HCT116 (cell line): ENCODE measurements at regions of chr9 and their contacts with region 1.

Region 1: GRCh38 chr9:613771-614347 is 227.6 kb upstream of the DMRT1 start:
- DNase-seq: peak; percentile 13
- ATAC-seq: peak; percentile 97
- H3K4me3 ChIP-seq: no peak overlapping the region
- H3K27ac ChIP-seq: no peak overlapping the region
- H3K4me1 ChIP-seq: no peaks in the 10 kb centered on the region
- H3K27me3 ChIP-seq: no peaks in the 10 kb centered on the region
- CTCF ChIP-seq: peak; percentile 40 to 97 (median 69)
- POLR2A ChIP-seq: no peak
- RAD21 ChIP-seq: peak; percentile 73

Region 2: DNA sequence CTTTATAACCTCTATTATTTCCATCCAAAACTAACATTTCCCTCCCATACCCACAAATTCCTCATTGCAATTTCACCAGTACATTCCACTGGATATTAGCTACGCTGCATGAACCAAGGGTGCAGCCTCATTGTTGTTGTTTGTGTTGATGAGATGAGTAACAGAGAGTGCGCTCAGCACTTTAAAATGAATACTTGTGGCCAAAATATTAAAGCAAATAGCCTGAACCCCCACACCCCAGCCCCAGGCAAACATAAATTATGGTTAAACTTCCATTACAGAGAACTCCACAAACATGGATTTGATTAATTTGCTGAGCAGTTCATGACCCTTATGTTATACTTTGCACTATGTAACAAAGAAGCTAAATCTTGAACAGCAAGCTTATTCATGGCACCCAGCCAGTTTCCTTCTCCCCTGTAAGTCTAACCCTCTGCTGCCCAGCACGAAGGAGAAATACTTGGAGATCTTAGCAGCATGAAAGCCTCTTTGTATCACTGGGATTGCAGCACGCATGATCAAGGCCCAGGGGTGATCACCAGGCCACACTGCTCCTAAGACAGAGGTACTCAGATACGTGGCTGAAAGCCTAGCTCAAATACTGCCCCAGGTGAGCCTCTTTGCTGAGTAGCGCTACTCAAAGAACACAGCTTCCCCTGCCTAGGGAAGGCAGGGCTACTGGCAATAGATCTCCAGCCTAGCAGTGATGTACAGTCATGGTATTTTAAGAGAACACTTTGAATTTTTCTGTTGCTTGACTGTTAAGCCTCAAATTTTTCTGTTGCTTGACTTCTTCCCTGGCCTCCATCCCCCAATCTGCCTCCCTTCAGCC is 194.1 kb before region 1 on chr9:
- CTCF ChIA-PET with region 1: no interaction called
- POLR2A ChIA-PET with region 1: no interaction called
- RAD21 ChIA-PET with region 1: no interaction called
- intact Hi-C with region 1: no loop called
- DNase-seq: no peak
- ATAC-seq: no peak
- H3K4me3 ChIP-seq: no peak overlapping the region
- H3K27ac ChIP-seq: no peak overlapping the region
- H3K4me1 ChIP-seq: no peaks in the 10 kb centered on the region
- H3K27me3 ChIP-seq: no peaks in the 10 kb centered on the region
- CTCF ChIP-seq: no peak
- POLR2A ChIP-seq: no peak
- RAD21 ChIP-seq: no peak

Region 3: GRCh38 chr9:573671-574410 is 40.0 kb before region 1 on chr9:
- CTCF ChIA-PET with region 1: no interaction called
- POLR2A ChIA-PET with region 1: no interaction called
- RAD21 ChIA-PET with region 1: no interaction called
- intact Hi-C with region 1: no loop called
- DNase-seq: no peak
- ATAC-seq: no peak
- H3K4me3 ChIP-seq: no peak overlapping the region
- H3K27ac ChIP-seq: no peak overlapping the region
- H3K4me1 ChIP-seq: no peaks in the 10 kb centered on the region
- H3K27me3 ChIP-seq: no peaks in the 10 kb centered on the region
- CTCF ChIP-seq: no peak
- POLR2A ChIP-seq: no peak
- RAD21 ChIP-seq: no peak

Region 4: GRCh38 chr9:757246-757881 is 143.5 kb after region 1 on chr9:
- CTCF ChIA-PET with region 1: interaction called, 4 read pairs
- POLR2A ChIA-PET with region 1: no interaction called
- RAD21 ChIA-PET with region 1: no interaction called
- intact Hi-C with region 1: loop called (anchors 2 kb)
- DNase-seq: peak; percentile 24
- ATAC-seq: peak; percentile 82
- H3K4me3 ChIP-seq: no peak overlapping the region
- H3K27ac ChIP-seq: no peak overlapping the region
- H3K4me1 ChIP-seq: peaks cover 8 to 25% of the 10 kb centered on the region in 2 experiments
- H3K27me3 ChIP-seq: no peaks in the 10 kb centered on the region
- CTCF ChIP-seq: peak; percentile 42 to 67 (median 54)
- POLR2A ChIP-seq: no peak
- RAD21 ChIP-seq: peak; percentile 77

Region 5: DNA sequence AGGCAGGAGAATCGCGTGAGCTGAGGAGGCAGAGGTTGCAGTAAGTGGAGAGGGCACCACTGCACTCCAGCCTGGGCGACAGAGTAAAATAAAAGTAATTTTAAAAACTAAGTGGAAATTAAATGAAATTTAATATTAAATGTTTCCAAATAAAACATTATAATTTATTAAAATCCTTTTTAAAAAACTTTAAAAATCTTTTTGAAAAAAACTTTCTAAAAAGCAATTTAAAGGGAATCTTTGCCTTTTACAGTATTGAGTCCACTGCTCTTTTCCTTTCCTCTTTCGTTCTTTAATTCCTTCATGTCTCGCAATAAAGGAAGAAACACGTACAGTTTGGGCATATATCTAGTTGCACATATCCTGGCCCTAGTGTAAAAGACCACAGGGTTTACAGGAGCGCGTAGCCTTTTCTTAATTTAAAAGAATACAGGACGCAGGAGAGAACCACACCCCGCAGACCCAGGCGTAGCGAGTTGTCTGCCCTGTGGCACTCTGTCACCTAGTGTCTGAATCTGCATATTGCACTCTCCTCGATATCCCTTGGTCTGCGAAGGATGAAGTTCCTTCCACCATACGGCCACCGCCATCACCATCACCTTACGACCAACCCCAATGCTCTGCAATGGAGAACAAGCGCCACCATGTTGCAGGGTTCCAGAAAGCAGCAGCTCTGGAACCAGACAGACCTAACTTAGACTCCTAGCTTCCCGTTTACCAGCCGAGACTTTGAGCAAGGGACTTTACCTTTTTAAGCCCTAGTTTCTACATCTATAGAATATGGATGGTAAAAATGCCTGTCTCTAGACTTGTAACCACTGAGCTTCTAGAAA is 150.0 kb after region 1 on chr9:
- CTCF ChIA-PET with region 1: interaction called, 4 read pairs
- POLR2A ChIA-PET with region 1: no interaction called
- RAD21 ChIA-PET with region 1: no interaction called
- intact Hi-C with region 1: loop called (anchors 1 kb)
- DNase-seq: peak; percentile 90
- ATAC-seq: peak; percentile 100
- H3K4me3 ChIP-seq: no peak overlapping the region; a peak in 1 of 4 replicates
- H3K27ac ChIP-seq: no peak overlapping the region
- H3K4me1 ChIP-seq: peaks cover 3 to 6% of the 10 kb centered on the region in 2 experiments; a peak in 3 of 4 replicates
- H3K27me3 ChIP-seq: peaks cover 4% of the 10 kb centered on the region; the same call in 1 of the 2 replicates
- CTCF ChIP-seq: peak; percentile 81 to 96 (median 93)
- POLR2A ChIP-seq: no peak
- RAD21 ChIP-seq: peak; percentile 95

Region 6: DNA sequence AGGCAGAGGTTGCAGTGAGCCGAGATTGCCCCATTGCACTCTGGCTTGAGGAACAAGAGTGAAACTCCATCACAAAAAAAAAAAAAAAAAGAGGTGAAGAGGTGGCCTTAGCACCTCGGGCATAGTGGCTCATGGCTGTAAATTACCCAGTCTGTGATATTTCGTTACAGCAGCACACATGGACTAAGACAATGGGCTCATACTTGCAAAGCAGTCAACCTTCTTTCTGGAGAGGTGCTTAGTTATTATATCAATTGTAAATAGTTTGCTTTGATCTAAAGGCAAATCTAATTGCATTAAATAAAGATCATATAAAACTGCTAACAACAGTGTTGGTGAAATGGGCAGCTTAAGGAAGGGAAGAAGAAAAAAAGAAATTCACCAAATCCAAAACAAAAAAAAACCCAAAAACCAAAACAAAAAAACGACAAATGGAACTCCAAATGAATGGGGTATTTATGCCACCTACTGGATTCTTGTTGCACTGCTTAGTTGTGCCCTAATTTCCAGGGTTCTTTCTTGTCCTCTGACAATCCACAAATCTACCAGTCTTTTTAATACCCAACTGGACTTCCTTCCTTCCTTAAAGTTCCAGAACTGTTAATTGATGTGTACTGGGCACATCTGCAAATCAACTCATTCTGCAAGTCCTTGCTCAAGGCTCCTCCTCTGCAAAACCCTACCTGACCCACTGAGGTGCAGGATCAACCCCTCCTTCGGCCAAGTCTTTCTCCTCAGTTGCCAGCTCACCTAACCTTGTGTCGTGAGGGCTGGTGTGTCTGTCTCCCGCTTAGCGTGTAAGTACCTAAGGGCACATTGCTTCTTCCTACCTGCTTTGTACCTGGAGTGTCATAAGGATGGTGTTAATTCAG is 192.7 kb after region 1 on chr9:
- CTCF ChIA-PET with region 1: no interaction called
- POLR2A ChIA-PET with region 1: no interaction called
- RAD21 ChIA-PET with region 1: no interaction called
- intact Hi-C with region 1: loop called (anchors 2 kb)
- DNase-seq: no peak
- ATAC-seq: peak; percentile 77
- H3K4me3 ChIP-seq: no peak overlapping the region
- H3K27ac ChIP-seq: no peak overlapping the region
- H3K4me1 ChIP-seq: peaks cover 0 to 6% of the 10 kb centered on the region in 2 experiments; a peak in 2 of 4 replicates
- H3K27me3 ChIP-seq: no peaks in the 10 kb centered on the region
- CTCF ChIP-seq: peak; percentile 56 to 77 (median 56); a peak in 5 of 6 replicates
- POLR2A ChIP-seq: no peak
- RAD21 ChIP-seq: peak; percentile 69